ENCODE measurements at regions of chr6 and their contacts with region 1.

Region 1: DNA sequence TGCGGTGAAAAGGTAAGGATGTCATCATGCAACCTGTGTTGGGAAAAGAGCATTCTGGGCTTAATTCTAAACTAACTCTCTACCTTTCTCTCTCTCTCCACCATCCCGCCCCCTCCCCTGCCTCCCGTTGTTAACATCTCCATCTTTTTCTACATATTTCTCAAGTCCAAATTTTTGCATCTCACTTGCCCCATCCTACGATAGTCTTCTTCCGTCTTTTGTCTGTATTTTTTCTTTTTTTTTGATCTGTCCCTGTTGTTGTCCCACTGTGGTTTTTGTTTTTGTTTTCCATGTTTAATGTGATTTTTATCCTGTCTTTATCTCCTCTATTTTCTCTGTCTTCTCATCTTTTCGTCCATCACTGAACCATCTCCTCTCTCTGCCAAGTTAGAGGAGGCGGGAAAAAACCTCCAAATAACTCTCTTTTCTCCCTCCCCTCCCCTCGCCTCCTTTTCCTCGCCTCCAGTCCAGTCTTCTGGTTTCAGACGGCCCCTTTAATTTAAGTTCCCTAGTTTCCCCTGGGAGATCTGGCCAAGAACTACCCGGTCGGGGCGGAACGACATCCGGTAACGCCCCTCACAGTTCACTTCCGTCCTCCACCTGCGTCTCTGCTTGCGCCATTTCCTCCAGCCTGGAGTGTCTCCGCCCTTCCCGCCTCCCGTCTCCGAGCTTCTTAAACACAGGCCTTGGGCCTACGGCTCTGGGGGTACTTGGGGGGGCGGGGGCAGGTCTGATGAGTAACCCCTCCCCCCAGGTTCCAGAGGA is at the start of gene NFKBIL1:
- DNase-seq: peak; percentile 95
- ATAC-seq: peak; percentile 97
- total RNA-seq, gene NFKBIL1: 12.7 TPM

Region 2: DNA sequence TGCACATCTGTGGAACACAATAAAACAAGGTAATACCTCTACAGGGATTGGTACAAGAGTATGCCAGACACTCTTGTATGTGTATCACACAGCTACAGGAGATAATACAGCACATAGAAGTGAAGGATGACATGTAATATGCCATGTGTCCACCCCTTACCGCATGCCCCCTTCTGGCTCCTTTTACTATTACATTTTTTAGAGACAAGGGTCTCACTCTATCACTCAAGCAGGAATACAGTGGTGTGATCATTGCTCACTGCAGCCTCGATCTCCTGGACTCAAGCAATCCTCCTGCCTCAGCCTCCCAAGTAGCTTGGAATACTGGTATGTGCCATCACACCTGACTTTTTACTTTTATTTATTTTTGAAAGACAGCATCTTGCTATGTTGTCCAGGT is 49.9 kb after region 1 on chr6:
- intact Hi-C with region 1: loop called (anchors 2 kb)
- DNase-seq: no peak
- ATAC-seq: peak; percentile 52

Region 3: DNA sequence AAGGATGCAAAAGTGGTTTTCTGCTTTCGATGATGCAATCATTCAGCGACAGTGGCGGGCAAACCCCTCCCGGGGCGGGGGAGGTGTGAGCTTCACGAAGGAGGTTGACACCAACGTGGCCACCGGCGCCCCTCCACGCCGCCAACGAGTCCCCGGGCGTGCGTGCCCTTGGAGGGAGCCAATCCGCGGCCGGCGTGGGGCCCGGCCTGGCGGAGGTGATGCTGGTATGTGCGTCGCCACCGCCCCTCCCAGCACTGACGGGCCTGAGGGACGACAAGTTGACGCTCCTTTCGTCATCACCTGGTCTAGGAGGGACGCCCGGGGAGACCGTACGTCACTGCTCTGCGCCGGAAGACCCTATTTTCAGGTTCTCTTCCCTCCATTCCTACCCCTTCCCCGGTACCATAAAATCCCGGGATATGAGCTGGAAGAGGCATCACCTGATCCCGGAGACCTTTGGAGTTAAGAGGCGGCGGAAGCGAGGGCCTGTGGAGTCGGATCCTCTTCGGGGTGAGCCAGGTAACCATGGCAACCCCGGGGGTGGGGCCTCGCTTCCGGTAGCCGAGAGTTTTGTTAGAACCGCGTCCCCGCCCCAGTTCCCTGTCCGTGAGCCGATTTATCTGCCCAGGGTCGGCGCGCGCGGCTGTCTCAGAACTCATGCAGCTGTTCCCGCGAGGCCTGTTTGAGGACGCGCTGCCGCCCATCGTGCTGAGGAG is 425.0 kb after region 1 on chr6 and contains the start of gene DXO:
- intact Hi-C with region 1: no loop called
- DNase-seq: peak; percentile 97
- ATAC-seq: peak; percentile 96
- total RNA-seq, gene DXO: 11.5 TPM